WTC11 (cell line): ENCODE measurements at regions of chr20 and their contacts with region 1.

Region 1: GRCh38 chr20:36399147-36399968 is 93.2 kb downstream of the DLGAP4 start:
- DNase-seq: peak; percentile 96
- ATAC-seq: peak; percentile 96
- H3K4me3 Mint-ChIP-seq: no peak overlapping the region
- H3K27ac Mint-ChIP-seq: peak overlapping the region; percentile 69; the same call in 1 of the 2 replicates
- H3K4me1 Mint-ChIP-seq: peaks cover 18% of the 10 kb centered on the region
- H3K27me3 Mint-ChIP-seq: no peaks in the 10 kb centered on the region
- CTCF ChIP-seq: peak; percentile 63

Region 2: DNA sequence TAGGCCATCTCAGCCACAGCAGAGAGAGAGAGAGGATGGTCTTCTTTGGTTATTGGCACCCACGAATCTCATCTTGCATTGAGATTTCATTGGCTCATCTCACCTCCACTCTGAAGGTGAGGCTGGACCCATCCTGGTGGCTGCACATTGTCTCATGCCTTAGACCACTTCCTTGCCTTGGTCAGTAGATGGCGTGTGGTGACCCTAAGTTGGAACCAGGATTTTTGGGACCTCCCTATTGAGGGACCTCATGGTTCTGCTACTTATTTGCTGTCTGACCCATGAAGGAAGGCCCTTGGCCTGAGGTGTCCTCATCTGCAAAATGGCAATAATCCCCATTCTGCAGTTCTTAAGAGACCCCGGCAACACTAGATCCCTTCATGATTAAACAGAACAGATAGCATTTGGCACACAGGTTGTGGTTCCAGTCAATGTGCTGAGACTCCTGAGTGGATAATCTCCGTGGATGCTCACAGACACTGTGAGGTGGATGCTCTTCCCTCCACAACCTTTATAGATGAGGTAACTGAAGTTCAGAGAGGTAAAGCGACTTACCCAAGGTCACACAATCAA is 184.6 kb before region 1 on chr20:
- CTCF ChIA-PET with region 1: interaction called, 21 read pairs
- POLR2A ChIA-PET with region 1: no interaction called
- DNase-seq: peak; percentile 43
- ATAC-seq: peak; percentile 77
- H3K4me3 Mint-ChIP-seq: no peak overlapping the region
- H3K27ac Mint-ChIP-seq: no peak overlapping the region
- H3K4me1 Mint-ChIP-seq: no peaks in the 10 kb centered on the region; the same call in 1 of the 2 replicates
- H3K27me3 Mint-ChIP-seq: no peaks in the 10 kb centered on the region
- CTCF ChIP-seq: peak; percentile 45; the same call in 1 of the 2 replicates

Region 3: GRCh38 chr20:36285746-36286447 is 113.5 kb before region 1 on chr20:
- CTCF ChIA-PET with region 1: interaction called, 10 read pairs
- POLR2A ChIA-PET with region 1: no interaction called
- DNase-seq: no peak
- ATAC-seq: peak; percentile 83
- H3K4me3 Mint-ChIP-seq: no peak overlapping the region
- H3K27ac Mint-ChIP-seq: no peak overlapping the region
- H3K4me1 Mint-ChIP-seq: no peaks in the 10 kb centered on the region
- H3K27me3 Mint-ChIP-seq: no peaks in the 10 kb centered on the region
- CTCF ChIP-seq: no peak

Region 4: DNA sequence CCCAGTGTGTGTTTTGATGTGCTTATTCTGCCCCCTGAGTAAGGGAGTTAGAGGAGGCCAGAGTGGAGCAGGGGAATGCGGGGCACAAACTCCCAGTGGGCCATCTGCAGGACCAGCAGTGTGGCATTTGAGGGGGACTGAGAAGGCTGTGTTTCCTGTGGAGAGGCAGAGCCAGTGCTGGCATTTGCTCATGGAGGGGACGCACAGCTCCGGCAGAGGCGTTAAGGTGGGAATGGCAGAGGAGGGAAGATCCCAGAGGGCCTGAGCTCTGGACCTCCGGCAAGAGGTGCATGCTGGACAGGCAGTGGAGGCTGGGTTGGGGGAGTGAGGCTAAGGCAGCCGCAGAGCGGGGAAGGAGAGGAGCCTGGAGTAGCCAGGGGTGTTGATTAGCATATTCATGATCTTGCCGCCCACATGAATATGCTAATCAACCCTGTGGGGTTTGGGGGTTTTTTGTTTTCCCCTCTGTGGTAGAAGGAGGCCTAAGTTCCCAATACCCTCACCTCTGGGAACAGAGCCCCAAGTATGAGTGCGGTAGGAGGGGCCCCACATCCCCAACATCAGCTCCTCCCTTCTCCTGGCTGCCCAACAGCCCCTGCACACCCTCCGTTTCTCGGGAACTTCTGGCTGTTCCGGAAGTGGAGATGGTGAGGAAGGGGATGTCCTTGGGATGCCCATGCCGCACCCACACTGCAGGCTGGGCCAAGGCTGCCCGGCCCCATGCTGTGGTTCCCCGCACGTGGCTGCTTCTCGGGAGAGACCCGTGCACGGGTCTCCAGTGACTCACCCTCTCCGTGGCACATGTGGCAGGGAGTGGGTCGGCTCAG is 59.5 kb before region 1 on chr20:
- CTCF ChIA-PET with region 1: interaction called, 11 read pairs
- POLR2A ChIA-PET with region 1: no interaction called
- DNase-seq: peak; percentile 48
- ATAC-seq: peak; percentile 72
- H3K4me3 Mint-ChIP-seq: no peak overlapping the region
- H3K27ac Mint-ChIP-seq: no peak overlapping the region
- H3K4me1 Mint-ChIP-seq: peaks cover 33% of the 10 kb centered on the region
- H3K27me3 Mint-ChIP-seq: peaks cover 18% of the 10 kb centered on the region
- CTCF ChIP-seq: no peak

Region 5: GRCh38 chr20:36384022-36384619 is 15.2 kb before region 1 on chr20:
- CTCF ChIA-PET with region 1: interaction called, 36 read pairs
- POLR2A ChIA-PET with region 1: no interaction called
- DNase-seq: peak; percentile 88
- ATAC-seq: peak; percentile 100
- H3K4me3 Mint-ChIP-seq: no peak overlapping the region
- H3K27ac Mint-ChIP-seq: no peak overlapping the region
- H3K4me1 Mint-ChIP-seq: no peaks in the 10 kb centered on the region
- H3K27me3 Mint-ChIP-seq: no peaks in the 10 kb centered on the region; the same call in 1 of the 2 replicates
- CTCF ChIP-seq: no peak

Region 6: DNA sequence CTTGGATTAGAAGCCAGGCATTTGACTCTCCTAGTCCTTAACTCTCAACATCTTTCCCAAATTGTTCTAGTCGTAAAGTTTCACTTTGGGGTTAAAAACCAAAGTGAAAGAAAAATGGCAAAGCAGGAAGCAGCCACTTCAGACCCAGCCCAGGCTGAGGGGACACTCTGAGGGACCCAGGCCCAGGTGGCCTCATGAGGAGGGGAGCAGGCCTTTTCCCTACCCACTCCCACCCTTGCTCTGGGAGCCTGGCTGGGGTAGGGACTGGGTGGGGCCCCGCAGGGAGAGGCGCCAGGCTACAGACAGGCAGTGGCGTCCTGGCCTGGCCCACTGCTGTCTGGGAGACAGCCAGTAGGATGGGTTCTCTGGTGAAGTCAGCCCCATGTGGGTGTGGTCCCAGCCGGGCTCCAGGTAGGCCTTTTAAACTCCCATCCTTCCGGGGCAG is 73.3 kb after region 1 on chr20:
- CTCF ChIA-PET with region 1: interaction called, 18 read pairs
- POLR2A ChIA-PET with region 1: no interaction called
- DNase-seq: peak; percentile 68
- ATAC-seq: peak; percentile 98
- H3K4me3 Mint-ChIP-seq: no peak overlapping the region
- H3K27ac Mint-ChIP-seq: peak overlapping the region; percentile 90
- H3K4me1 Mint-ChIP-seq: peaks cover 35% of the 10 kb centered on the region
- H3K27me3 Mint-ChIP-seq: no peaks in the 10 kb centered on the region
- CTCF ChIP-seq: no peak